IMR-90 (cell line): ENCODE measurements at regions of chr10 and their contacts with region 1.

Region 1: DNA sequence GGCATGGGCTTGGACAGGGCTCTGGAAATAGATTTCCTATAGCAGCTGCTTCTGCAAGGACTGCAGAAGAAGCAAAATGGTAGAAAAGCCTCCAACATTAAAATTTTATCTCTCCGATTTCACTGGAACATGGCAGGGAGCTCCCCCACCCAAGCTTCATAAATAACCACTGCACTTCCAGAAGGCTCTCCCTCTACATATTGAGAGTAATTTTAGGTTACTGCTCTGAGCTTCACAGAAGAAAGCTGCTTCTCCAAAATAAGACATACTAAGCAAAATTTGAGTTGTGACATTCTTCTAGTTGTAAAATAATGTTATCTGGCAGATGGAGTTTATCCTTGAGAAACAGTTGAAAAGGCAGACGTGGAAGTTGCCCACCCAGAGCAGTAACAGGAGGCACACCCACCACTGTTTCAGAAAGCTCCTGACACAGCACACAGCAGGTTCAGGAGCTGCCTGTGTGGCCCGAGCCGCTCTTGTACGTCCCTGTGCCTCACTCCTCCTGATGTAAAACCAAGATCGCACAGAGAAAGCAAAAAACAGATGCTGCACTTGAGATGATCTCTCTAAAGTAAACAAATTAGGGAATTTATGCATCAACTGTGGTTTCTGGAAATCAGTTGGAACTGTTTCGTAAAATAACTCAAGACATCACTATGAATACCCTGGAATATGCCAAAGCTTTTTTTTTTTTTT is 621.0 kb downstream of the PARD3 start:
- DNase-seq: peak; percentile 88
- ATAC-seq: peak; percentile 89
- H3K4me3 ChIP-seq: no peak overlapping the region
- H3K27ac ChIP-seq: peak overlapping the region; percentile 41; the same call in 1 of the 2 replicates
- H3K4me1 ChIP-seq: peaks cover 3% of the 10 kb centered on the region
- H3K27me3 ChIP-seq: peaks cover 2% of the 10 kb centered on the region; the same call in 1 of the 2 replicates
- CTCF ChIP-seq: no peak
- POLR2A ChIP-seq: no peak
- RAD21 ChIP-seq: no peak

Region 2: DNA sequence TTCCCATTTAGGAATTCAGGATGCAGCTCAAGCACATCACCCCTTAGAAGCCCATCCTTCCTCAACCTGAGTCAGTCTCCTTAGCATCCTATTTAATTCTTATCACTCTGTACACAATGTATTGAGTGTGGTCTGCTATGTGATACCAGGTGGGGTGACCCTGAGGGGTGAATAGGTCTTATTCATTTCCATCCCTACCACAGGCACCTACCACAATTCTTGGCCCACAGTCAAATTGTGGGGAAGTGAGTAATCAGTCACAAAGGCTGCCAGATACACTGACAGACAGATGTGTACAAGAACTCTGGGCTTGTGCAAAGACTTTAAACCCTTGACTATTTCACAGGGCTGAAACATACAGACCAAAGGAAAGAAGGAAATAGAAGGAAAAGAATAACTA is 60.5 kb after region 1 on chr10:
- CTCF ChIA-PET with region 1: no interaction called
- POLR2A ChIA-PET with region 1: no interaction called
- dilution Hi-C with region 1: no loop called
- in situ Hi-C with region 1: no loop called
- intact Hi-C with region 1: no loop called
- DNase-seq: peak; percentile 48
- ATAC-seq: no peak
- H3K4me3 ChIP-seq: no peak overlapping the region
- H3K27ac ChIP-seq: no peak overlapping the region
- H3K4me1 ChIP-seq: no peaks in the 10 kb centered on the region
- H3K27me3 ChIP-seq: no peaks in the 10 kb centered on the region
- CTCF ChIP-seq: no peak
- POLR2A ChIP-seq: no peak
- RAD21 ChIP-seq: no peak

Region 3: GRCh38 chr10:35316218-35316967 is 1122.3 kb after region 1 on chr10:
- CTCF ChIA-PET with region 1: no interaction called
- POLR2A ChIA-PET with region 1: no interaction called
- dilution Hi-C with region 1: no loop called
- in situ Hi-C with region 1: no loop called
- intact Hi-C with region 1: loop called (anchors 10 kb)
- DNase-seq: no peak
- ATAC-seq: no peak; the same call in 1 of the 2 replicates
- H3K4me3 ChIP-seq: no peak overlapping the region
- H3K27ac ChIP-seq: peak overlapping the region; percentile 46; the same call in 1 of the 2 replicates
- H3K4me1 ChIP-seq: peaks cover 2% of the 10 kb centered on the region; the same call in 1 of the 2 replicates
- H3K27me3 ChIP-seq: no peaks in the 10 kb centered on the region
- CTCF ChIP-seq: no peak
- POLR2A ChIP-seq: no peak
- RAD21 ChIP-seq: no peak